SK-N-SH (cell line): ENCODE measurements at regions of chr3 and their contacts with region 1.

Region 1: GRCh38 chr3:87161013-87161412 is 66.1 kb upstream of the CHMP2B start:
- DNase-seq: no peak
- H3K4me3 ChIP-seq: no peak overlapping the region
- H3K27ac ChIP-seq: no peak overlapping the region
- H3K4me1 ChIP-seq: no peaks in the 10 kb centered on the region
- H3K27me3 ChIP-seq: no peaks in the 10 kb centered on the region
- CTCF ChIP-seq: no peak
- EP300 ChIP-seq: no peak
- RAD21 ChIP-seq: no peak

Region 2: DNA sequence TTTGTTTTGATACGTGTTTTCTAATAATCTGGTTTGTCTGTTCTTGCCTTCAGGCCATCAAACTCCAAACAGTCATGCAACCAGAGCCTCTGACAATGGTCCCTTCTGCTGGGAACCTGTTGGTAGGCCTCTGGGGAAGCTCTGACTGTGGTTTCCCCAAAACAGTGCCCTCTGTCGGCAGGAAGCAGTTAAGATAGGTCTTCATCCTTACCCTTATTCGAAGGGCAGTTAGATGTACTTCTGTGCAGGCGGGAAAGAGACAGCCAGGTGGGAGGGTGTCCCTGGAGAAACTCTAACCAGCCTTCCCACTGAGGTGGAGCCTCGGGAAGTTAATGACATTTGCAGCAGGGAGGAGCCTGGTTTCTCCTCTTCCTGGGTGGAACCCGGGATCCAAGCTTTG is 15.5 kb before region 1 on chr3:
- CTCF ChIA-PET with region 1: interaction called, 10 read pairs
- POLR2A ChIA-PET with region 1: no interaction called
- DNase-seq: peak; percentile 8
- H3K4me3 ChIP-seq: no peak overlapping the region
- H3K27ac ChIP-seq: no peak overlapping the region
- H3K4me1 ChIP-seq: no peaks in the 10 kb centered on the region
- H3K27me3 ChIP-seq: no peaks in the 10 kb centered on the region
- CTCF ChIP-seq: peak; percentile 56
- EP300 ChIP-seq: no peak
- RAD21 ChIP-seq: 0 out of 2 replicates have a peak, but pooled peaks have one; percentile 6